ENCODE measurements at regions of chr2 and their contacts with region 1.

Region 1: GRCh38 chr2:23636426-23636825 is 251.4 kb downstream of the KLHL29 start:
- DNase-seq: no peak
- CTCF ChIP-seq: no peak

Region 2: DNA sequence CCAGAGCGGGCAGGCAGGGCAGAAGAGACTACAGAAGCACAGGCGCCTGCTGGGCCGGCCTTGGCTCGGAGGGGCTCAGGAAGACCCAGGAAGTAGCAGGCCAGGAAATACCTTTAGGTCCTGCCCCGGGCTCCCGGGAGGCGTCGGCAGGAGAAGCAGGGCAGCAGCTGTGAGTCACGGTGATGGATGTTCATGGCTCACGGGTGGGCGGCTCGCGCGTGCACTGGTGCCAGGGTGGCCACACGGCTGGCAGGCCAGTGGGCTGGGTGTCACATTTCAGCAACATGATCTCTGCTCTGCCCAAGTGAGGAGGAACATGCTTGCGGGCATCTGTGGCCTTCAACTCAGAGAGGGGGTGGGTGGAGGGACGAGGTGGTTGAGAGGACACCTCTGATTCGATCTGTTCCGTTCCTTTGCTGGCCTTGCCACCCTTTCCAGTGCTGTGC is 112.1 kb before region 1 on chr2:
- CTCF ChIA-PET with region 1: no interaction called
- POLR2A ChIA-PET with region 1: no interaction called
- DNase-seq: no peak
- CTCF ChIP-seq: no peak

Region 3: GRCh38 chr2:23578964-23579671 is 57.3 kb before region 1 on chr2:
- CTCF ChIA-PET with region 1: no interaction called
- POLR2A ChIA-PET with region 1: no interaction called
- DNase-seq: no peak
- CTCF ChIP-seq: no peak

Region 4: DNA sequence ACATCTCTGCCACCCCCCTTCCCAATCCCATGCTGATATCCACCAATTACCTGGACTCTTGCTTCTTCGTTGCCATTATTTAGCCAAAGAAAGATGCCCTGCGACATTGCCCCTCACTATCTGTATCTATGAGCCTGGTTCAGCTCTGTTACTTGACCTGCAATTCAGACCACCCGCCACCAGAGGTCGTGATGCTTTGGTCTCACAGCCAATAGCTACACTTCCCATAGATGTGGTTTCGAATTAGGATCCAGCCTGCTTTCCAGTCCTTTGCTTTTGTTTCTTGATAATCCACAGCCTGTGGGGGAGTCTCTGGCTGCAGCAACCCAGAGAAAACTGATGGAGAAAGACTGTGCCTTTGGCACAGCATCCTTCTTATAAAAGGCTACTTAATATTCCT is 12.0 kb before region 1 on chr2:
- CTCF ChIA-PET with region 1: interaction called, 12 read pairs
- POLR2A ChIA-PET with region 1: no interaction called
- DNase-seq: no peak
- CTCF ChIP-seq: peak; percentile 11

Region 5: DNA sequence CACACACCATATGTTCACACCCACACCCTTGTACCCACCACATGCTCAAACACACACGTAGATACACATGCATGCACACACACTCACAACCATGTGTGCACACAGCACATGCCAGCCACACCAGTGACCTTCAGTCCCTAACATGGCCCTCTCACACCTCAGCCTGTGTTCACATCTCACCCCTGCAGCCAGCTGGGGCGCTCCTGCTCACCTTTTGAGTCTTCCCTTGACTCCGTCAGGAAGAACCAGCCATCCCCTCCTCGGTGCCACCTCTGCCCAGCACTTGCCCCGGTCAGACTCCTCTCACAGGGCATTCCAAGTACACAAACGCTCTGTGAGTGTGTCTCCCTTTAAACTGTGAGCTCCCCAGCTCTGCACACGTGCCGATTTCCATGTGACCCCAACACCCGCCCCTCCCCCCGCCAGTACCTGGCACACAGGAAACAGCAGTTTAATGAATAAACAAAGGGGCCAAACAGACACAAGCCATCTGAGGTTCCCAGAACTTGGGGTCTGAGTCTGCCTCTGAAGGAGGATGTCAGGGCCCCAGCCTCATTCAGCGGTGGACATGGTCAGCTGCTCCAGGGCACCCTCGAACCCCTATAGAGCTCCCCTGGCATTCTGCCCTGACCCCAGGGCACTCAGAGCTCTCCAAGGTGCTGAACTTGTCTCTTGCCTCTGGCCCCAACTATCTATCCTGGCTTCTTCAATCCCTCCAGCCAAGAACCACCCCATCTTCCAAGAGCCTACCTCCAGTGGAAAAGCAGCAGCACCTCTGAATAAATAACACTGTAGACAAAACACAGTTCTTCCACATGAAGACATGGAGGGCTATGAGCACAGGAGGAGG is 37.6 kb after region 1 on chr2:
- CTCF ChIA-PET with region 1: no interaction called
- POLR2A ChIA-PET with region 1: no interaction called
- DNase-seq: no peak
- CTCF ChIP-seq: no peak